ENCODE measurements at regions of chrX and their contacts with region 1.

Region 1: DNA sequence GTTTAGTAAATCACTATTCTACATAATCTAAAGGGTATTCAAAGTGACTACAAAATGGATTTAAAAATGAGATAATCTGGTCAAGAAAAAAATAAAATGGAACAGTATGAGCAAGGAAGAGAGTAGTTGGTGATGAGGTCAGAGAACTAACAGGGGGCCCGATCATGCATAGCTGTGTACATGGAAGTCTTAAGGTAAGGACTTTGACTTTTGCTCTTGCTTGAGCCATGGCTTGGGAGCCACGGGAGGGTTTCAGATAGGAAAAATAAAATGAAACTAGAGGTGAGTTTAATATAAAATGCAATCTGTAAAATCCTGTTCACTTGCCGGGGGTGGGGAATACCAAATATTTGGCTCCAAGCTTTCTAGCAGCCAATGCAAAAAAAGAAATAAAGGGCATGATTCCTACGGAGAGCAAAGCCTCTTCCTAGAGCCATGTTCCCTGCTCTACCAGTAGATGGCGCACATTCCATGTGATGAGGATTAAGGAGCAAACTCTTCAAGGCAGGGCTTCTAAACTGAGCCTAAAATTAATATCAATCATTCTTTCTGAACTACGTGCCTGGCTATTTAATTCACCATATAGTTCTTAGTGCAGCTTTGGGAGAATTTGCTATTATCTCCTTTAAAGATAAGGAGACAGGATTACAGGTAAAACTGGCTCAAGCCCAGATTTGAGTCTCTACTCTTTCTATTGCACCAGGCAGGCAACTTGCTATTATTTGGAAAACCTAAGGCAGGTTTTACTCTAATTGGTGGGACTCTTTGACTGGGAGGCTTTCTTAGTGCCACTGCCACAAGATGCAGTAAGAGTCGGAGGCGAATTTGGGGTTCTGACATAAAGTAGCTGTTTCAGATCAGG is 6.8 kb upstream of the CLCN5 start:
- DNase-seq: peak; percentile 82
- H3K4me3 Mint-ChIP-seq: no peak overlapping the region
- H3K27ac Mint-ChIP-seq: no peak overlapping the region
- H3K4me1 Mint-ChIP-seq: peaks cover under 1% of the 10 kb centered on the region
- H3K27me3 Mint-ChIP-seq: no peaks in the 10 kb centered on the region

Region 2: GRCh38 chrX:49856819-49857218 is 58.8 kb before region 1 on chrX:
- intact Hi-C with region 1: no loop called
- DNase-seq: no peak
- H3K4me3 Mint-ChIP-seq: no peak overlapping the region
- H3K27ac Mint-ChIP-seq: no peak overlapping the region
- H3K4me1 Mint-ChIP-seq: no peaks in the 10 kb centered on the region
- H3K27me3 Mint-ChIP-seq: peaks cover 2% of the 10 kb centered on the region

Region 3: GRCh38 chrX:50081282-50081889 is 165.8 kb after region 1 on chrX:
- intact Hi-C with region 1: loop called (anchors 10 kb)
- DNase-seq: peak; percentile 51
- H3K4me3 Mint-ChIP-seq: no peak overlapping the region
- H3K27ac Mint-ChIP-seq: no peak overlapping the region
- H3K4me1 Mint-ChIP-seq: no peaks in the 10 kb centered on the region
- H3K27me3 Mint-ChIP-seq: no peaks in the 10 kb centered on the region

Region 4: DNA sequence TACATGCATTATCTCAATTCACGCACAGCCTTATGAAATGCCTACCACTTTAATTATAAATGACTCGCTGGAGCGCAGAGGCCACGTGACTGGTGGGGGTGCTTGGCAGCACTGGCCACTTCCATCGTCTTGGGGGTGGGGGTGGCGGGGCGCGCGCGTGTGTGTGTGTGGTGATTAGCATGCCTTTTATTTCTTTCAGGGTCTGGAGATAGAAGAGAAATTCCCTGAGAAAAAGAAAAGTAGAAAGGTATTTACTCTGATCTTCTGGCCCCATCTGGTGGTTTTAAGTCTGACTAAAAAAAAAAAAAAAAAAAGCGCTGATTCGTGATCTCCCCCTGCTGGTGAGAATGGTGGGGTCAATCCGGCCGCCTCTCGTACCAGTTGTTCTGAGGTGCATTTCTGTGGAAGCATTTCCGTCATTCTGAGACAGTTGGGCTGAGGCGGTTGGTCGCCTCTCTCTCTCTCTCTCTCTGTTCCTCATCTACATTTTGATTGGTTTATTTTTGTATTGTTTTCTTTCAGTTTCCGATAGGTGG is 288.8 kb after region 1 on chrX and contains the start of gene CCNB3:
- intact Hi-C with region 1: loop called (anchors 1 kb)
- DNase-seq: peak; percentile 89
- H3K4me3 Mint-ChIP-seq: peak within 1 kb of the TSS; percentile 84
- H3K27ac Mint-ChIP-seq: peak within 1 kb of the TSS; percentile 91
- H3K4me1 Mint-ChIP-seq: peaks cover 8% of the 10 kb centered on the region
- H3K27me3 Mint-ChIP-seq: peaks cover 2% of the 10 kb centered on the region
- total RNA-seq, gene CCNB3: 0.56 and 1.0 TPM in 2 replicates

Measured in activated CD4-positive, alpha-beta T cell treated with anti-CD3 and anti-CD28 coated beads, Interleukin-2, amount 10 ng/mL, durations not matched to agents 24 days and 14 days (primary cell).